WTC11 (cell line): ENCODE measurements at regions of chr1 and their contacts with region 1.

Region 1: GRCh38 chr1:202184750-202185460 is 8.7 kb upstream of the LGR6 start:
- DNase-seq: peak; percentile 98
- ATAC-seq: peak; percentile 94
- H3K4me3 Mint-ChIP-seq: peak overlapping the region; percentile 38
- H3K27ac Mint-ChIP-seq: 0 out of 2 replicates have a peak overlapping the region, but pooled peaks have one; percentile 78
- H3K4me1 Mint-ChIP-seq: peaks cover 13% of the 10 kb centered on the region
- H3K27me3 Mint-ChIP-seq: peaks cover 4% of the 10 kb centered on the region; the same call in 1 of the 2 replicates
- CTCF ChIP-seq: peak; percentile 85

Region 2: DNA sequence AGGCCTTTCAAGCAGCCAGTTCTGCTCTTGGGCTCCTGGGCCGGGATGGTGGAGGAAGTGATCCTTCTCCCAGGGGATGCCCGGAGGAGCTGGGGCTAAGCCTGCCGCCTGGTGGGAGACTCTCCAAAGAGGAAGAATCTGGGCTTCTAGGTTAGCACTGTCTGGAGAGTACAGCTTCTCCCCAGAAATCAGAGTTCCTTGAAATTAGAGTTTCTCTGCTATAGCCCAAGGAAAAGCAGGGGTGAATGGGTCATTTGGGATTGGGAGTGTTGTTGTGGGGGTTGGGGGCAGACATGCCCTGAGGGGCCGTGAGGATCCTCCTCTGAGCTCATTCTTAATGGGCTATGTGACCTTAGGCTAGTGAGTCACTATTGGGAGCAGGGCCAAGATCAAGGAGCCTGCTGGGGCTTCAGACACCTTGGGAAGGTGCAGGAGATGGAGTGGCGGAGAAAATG is 15.2 kb after region 1 on chr1:
- CTCF ChIA-PET with region 1: interaction called, 19 read pairs
- POLR2A ChIA-PET with region 1: no interaction called
- DNase-seq: no peak
- ATAC-seq: peak; percentile 60
- H3K4me3 Mint-ChIP-seq: no peak overlapping the region
- H3K27ac Mint-ChIP-seq: no peak overlapping the region
- H3K4me1 Mint-ChIP-seq: 0 out of 2 replicates have a peak, but pooled peaks cover 3% of the 10 kb centered on the region
- H3K27me3 Mint-ChIP-seq: peaks cover 17% of the 10 kb centered on the region
- CTCF ChIP-seq: no peak